ENCODE measurements at regions of chr12 and their contacts with region 1.

Region 1: DNA sequence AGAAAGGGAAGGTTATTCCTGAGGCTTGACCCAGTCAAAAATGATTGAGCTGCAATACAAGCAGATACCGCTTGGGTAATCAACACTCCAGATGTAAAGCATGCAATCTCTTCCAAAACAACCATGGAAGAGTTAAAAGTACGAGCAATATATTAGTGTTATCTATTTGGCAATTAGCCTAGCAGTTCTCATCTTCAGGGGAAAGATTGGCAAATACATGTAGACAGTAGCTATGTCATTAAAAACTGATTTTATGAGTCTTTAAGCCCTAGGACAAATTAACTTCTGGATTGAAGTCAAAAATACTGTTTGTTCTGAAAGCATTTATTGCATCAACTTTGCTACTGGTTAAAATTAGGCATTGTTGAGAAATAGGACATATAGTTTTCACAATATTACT is 9.3 kb upstream of the GYS2 start:
- DNase-seq: no peak
- H3K4me3 Mint-ChIP-seq: no peak overlapping the region
- H3K27ac Mint-ChIP-seq: no peak overlapping the region
- H3K4me1 Mint-ChIP-seq: peaks cover 36% of the 10 kb centered on the region
- H3K27me3 Mint-ChIP-seq: no peaks in the 10 kb centered on the region

Region 2: DNA sequence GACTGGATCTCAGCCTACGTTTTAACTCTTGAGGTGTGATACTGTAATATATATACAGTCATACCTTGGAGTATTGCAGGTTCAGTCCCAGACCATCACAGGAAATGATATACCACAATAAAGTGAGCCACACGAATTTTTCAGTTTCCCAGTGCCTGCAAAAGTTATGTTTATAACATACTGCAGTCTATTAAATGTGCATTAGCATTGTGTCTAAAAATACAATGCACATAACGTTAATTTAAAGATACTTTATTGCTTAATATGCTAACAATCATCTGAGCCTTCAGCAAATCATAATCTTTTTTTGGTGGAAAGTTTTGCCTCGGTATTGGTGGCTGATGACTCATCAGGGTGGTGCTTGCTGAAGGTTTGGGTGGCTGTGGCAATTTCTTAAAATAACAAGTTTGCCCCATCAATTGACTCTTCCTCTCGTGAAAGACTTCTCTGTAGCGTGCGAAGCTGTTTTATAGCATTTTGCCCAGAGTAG is 157.6 kb before region 1 on chr12:
- intact Hi-C with region 1: loop called (anchors 2 kb)
- DNase-seq: peak; percentile 88
- H3K4me3 Mint-ChIP-seq: peak overlapping the region; percentile 59
- H3K27ac Mint-ChIP-seq: peak overlapping the region; percentile 97
- H3K4me1 Mint-ChIP-seq: peaks cover 50% of the 10 kb centered on the region
- H3K27me3 Mint-ChIP-seq: no peaks in the 10 kb centered on the region

Region 3: GRCh38 chr12:21546716-21547115 is 67.2 kb before region 1 on chr12:
- intact Hi-C with region 1: loop called (anchors 5 kb)
- DNase-seq: no peak
- H3K4me3 Mint-ChIP-seq: no peak overlapping the region
- H3K27ac Mint-ChIP-seq: no peak overlapping the region
- H3K4me1 Mint-ChIP-seq: peaks cover 5% of the 10 kb centered on the region
- H3K27me3 Mint-ChIP-seq: peaks cover 2% of the 10 kb centered on the region

Region 4: GRCh38 chr12:21800011-21800410 is 186.1 kb after region 1 on chr12:
- intact Hi-C with region 1: no loop called
- DNase-seq: no peak
- H3K4me3 Mint-ChIP-seq: no peak overlapping the region
- H3K27ac Mint-ChIP-seq: no peak overlapping the region
- H3K4me1 Mint-ChIP-seq: no peaks in the 10 kb centered on the region
- H3K27me3 Mint-ChIP-seq: no peaks in the 10 kb centered on the region